AG04449 (cell line): ENCODE measurements at regions of chr10 and their contacts with region 1.

Region 1: GRCh38 chr10:102112210-102112817 is 7.9 kb downstream of the LDB1 start:
- DNase-seq: no peak
- H3K4me3 ChIP-seq: peak overlapping the region; percentile 82
- CTCF ChIP-seq: no peak

Region 2: GRCh38 chr10:102101152-102101551 is 11.2 kb before region 1 on chr10:
- CTCF ChIA-PET with region 1: interaction called, 13 read pairs
- POLR2A ChIA-PET with region 1: interaction called, 8 read pairs
- DNase-seq: no peak
- H3K4me3 ChIP-seq: no peak overlapping the region
- CTCF ChIP-seq: no peak